PC-3 (cell line): ENCODE measurements at regions of chr6 and their contacts with region 1.

Region 1: GRCh38 chr6:72649032-72649984 is 27.4 kb downstream of the KCNQ5 start:
- DNase-seq: peak; percentile 92
- ATAC-seq: peak; percentile 52
- H3K4me3 ChIP-seq: no peak overlapping the region
- H3K27ac ChIP-seq: peak overlapping the region; percentile 91
- H3K4me1 ChIP-seq: peaks cover 48% of the 10 kb centered on the region
- H3K27me3 ChIP-seq: no peaks in the 10 kb centered on the region
- CTCF ChIP-seq: no peak

Region 2: GRCh38 chr6:72218125-72218524 is 431.2 kb before region 1 on chr6:
- CTCF ChIA-PET with region 1: no interaction called
- POLR2A ChIA-PET with region 1: no interaction called
- intact Hi-C with region 1: no loop called
- DNase-seq: peak; percentile 13
- ATAC-seq: peak; percentile 67; the same call in 1 of the 2 replicates
- H3K4me3 ChIP-seq: no peak overlapping the region
- H3K27ac ChIP-seq: no peak overlapping the region
- H3K4me1 ChIP-seq: peaks cover 10% of the 10 kb centered on the region; the same call in 1 of the 2 replicates
- H3K27me3 ChIP-seq: no peaks in the 10 kb centered on the region
- CTCF ChIP-seq: peak; percentile 25; the same call in 1 of the 2 replicates

Region 3: DNA sequence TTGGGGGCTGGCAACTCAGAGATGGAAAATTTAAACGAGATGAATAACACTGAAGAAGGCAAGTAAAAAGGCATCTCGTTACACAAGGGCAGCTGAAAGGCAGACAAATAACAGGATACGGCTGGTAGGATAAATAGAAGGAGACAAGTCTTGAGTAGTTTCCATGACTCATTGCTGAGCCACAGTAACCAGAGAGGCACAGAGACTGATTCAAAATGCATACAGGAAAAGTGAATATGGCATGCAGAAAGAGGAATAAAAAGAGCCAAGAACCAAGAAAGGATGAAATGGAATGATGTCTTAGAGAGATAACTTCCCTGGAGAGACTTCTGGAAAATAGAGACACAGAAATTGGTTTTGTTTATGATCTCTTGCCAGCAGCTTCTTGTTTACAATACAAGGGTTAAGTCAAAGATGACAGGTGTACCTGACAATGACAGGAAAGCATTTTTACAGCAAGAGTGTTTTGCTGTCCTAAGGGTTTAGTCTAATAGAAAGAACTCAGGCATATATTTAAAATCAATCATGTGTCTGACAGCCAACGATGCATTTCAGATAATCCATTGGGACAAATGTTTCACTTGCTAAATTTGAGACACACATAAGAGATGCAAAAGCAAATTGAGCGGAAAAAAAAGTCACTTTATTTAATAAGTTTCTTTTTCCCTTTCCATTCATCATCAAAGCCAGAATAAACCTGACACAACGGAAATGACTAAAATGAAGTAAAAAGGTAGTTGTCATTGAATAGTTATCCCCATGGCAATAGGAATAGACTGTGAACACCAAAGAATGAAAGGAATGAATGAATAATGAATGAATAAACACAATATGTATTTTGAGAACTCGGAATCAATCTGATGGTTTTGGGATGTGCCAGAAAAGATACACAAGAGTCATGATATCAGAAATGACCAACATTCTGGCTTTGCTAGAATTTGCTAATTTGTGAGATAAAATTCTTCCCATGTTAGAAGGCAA is 95.5 kb before region 1 on chr6:
- CTCF ChIA-PET with region 1: no interaction called
- POLR2A ChIA-PET with region 1: interaction called, 4 read pairs
- intact Hi-C with region 1: loop called (anchors 5 kb)
- DNase-seq: peak; percentile 85
- ATAC-seq: peak; percentile 84
- H3K4me3 ChIP-seq: peak overlapping the region; percentile 48
- H3K27ac ChIP-seq: peak overlapping the region; percentile 98
- H3K4me1 ChIP-seq: peaks cover 57% of the 10 kb centered on the region
- H3K27me3 ChIP-seq: no peaks in the 10 kb centered on the region
- CTCF ChIP-seq: no peak

Region 4: DNA sequence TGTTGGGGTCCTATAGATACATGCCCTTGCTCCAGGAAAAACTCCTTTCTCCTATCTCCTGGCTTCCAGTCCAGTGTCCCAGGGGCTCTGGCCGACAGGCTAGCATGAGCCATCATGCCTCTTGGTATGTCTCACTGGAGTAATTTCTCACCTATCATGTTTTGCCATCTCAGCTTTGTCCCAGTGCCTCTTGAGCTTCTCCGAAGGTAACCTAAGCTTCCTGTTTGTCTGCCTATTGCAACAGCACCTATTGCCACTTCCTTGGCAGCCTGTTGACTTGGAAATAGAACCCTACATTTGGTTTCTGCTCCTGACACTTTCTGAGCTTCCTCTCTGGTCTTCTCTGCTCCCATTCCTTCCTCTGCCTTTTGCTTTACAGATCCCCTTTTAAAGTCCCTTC is 170.3 kb after region 1 on chr6:
- CTCF ChIA-PET with region 1: no interaction called
- POLR2A ChIA-PET with region 1: no interaction called
- intact Hi-C with region 1: loop called (anchors 1 kb)
- DNase-seq: peak; percentile 48
- ATAC-seq: no peak
- H3K4me3 ChIP-seq: no peak overlapping the region
- H3K27ac ChIP-seq: no peak overlapping the region
- H3K4me1 ChIP-seq: peaks cover 11% of the 10 kb centered on the region
- H3K27me3 ChIP-seq: no peaks in the 10 kb centered on the region
- CTCF ChIP-seq: no peak

Region 5: DNA sequence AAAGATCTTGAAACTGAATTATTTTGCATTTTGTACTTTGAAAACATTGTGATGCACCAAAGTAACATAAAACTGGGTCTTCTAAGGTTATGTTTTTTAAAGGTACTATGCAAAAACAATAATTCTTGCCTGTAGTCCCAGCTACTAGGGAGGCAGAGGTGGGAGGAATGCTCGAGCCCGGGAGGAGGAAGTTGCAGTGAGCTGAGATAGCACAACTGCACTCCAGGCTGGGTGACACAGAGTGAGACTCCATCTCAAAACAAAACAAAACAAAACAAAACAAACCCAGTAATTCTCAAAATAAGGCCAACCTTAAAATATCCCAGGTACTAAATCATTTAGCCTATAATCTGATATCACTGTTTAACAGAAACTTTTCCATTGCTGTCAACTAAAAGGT is 306.4 kb after region 1 on chr6:
- CTCF ChIA-PET with region 1: no interaction called
- POLR2A ChIA-PET with region 1: no interaction called
- intact Hi-C with region 1: loop called (anchors 5 kb)
- DNase-seq: no peak
- ATAC-seq: no peak
- H3K4me3 ChIP-seq: no peak overlapping the region
- H3K27ac ChIP-seq: no peak overlapping the region
- H3K4me1 ChIP-seq: peaks cover 32% of the 10 kb centered on the region
- H3K27me3 ChIP-seq: no peaks in the 10 kb centered on the region
- CTCF ChIP-seq: no peak

Region 6: DNA sequence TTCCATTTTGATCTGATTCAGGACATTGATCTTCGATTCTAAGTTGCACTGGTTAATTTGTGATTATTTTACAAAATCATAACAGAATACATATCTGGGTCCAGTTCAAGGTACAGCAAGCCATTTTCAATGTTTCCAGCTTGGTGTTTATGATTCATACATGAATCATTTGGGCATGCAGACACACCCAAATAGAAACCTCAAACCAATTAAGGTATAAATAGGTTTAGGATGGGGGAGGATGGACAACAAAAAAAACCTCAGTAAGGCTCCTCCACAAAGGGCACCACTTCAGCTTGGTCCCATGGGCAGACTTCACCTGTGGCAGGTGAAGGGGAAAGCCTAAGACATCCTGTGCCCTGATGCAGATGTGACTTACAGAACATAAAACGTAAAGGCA is 383.3 kb after region 1 on chr6:
- CTCF ChIA-PET with region 1: no interaction called
- POLR2A ChIA-PET with region 1: interaction called, 8 read pairs
- intact Hi-C with region 1: loop called (anchors 1 kb)
- DNase-seq: peak; percentile 85
- ATAC-seq: peak; percentile 35
- H3K4me3 ChIP-seq: no peak overlapping the region
- H3K27ac ChIP-seq: peak overlapping the region; percentile 99
- H3K4me1 ChIP-seq: peaks cover 56% of the 10 kb centered on the region
- H3K27me3 ChIP-seq: no peaks in the 10 kb centered on the region
- CTCF ChIP-seq: no peak

Region 7: DNA sequence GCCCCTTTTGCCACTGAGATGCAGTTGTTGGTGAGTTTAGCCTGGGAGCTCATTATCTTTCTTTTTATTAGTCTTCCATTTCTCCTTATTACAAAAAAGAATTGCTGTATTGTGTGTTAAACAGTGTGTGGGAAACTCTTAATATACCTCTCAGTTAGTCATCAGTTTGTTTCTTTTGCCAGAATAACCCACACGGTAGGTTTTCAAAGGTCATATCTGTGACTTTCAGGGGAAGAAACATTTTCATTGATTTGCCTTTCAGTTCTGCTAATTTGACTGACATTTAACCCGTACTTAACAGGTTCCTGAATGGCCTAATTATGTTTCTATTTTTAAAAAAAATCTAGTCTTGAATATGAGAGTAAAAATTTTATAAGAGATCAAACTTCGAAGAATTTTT is 430.7 kb after region 1 on chr6:
- CTCF ChIA-PET with region 1: no interaction called
- POLR2A ChIA-PET with region 1: no interaction called
- intact Hi-C with region 1: loop called (anchors 1 kb)
- DNase-seq: peak; percentile 66
- ATAC-seq: peak; percentile 59
- H3K4me3 ChIP-seq: peak overlapping the region; percentile 45; the same call in 1 of the 2 replicates
- H3K27ac ChIP-seq: peak overlapping the region; percentile 100
- H3K4me1 ChIP-seq: peaks cover 54% of the 10 kb centered on the region
- H3K27me3 ChIP-seq: no peaks in the 10 kb centered on the region
- CTCF ChIP-seq: no peak

Region 8: GRCh38 chr6:73180763-73181619 is 531.7 kb after region 1 on chr6:
- CTCF ChIA-PET with region 1: no interaction called
- POLR2A ChIA-PET with region 1: no interaction called
- intact Hi-C with region 1: loop called (anchors 10 kb)
- DNase-seq: peak; percentile 76
- ATAC-seq: peak; percentile 91
- H3K4me3 ChIP-seq: peak overlapping the region; percentile 66
- H3K27ac ChIP-seq: no peak overlapping the region
- H3K4me1 ChIP-seq: peaks cover 6% of the 10 kb centered on the region; the same call in 1 of the 2 replicates
- H3K27me3 ChIP-seq: no peaks in the 10 kb centered on the region
- CTCF ChIP-seq: peak; percentile 86